T-cell (primary cell): ENCODE measurements at regions of chr13 and their contacts with region 1.

Region 1: DNA sequence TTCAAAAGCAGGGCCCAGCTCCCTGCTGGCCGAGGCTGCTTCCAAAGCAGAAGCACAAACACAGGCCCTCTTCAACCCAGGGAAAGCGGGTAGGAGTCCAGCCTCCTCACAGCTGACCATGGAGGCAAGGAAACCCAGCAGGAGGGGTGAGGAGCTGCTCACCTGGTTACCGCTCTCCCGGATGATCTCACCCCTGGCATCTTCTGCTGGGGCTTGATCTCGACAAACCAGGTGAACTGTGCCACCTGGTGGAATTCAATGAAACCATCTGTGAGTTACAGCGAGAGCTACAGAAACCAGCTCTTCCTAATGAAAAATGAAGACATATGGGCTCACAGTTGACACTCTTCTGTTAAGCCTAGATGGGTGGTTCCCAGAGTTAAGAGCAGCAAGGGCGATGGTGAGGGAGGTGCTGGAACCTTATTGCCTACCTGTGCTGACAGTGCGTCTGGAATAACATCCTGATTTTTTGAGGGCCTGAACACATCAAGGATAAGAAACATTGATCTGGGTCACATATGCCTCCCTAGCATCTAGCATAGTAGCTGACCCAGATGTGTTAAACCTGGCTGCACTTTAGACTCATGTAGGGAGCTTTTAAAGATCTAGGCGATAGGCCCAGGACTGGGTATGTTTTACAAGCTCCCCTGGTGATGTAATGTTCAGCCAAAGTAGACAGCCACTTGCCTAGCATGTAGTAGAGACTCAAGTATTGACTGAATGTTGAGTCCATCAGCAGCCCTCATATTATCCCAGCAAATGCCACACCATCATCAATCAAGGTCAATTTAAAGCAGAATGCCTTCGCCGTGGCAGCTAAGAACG is 6.1 kb downstream of the DHRS12 start:
- DNase-seq: peak in 34 of 35 experiments; percentile 17 to 81 (median 56)
- ATAC-seq: peak; percentile 60 to 75 (median 70)
- H3K4me3 ChIP-seq: no peak overlapping the region
- H3K4me3 Mint-ChIP-seq: no peak overlapping the region
- H3K27ac ChIP-seq: no peak overlapping the region
- H3K27ac Mint-ChIP-seq: peak overlapping the region in 1 of 2 donors; percentile 55
- H3K4me1 ChIP-seq: peaks cover 10 to 26% of the 10 kb centered on the region in 2 experiments
- H3K4me1 Mint-ChIP-seq: peaks cover 28 to 51% (median 37%) of the 10 kb centered on the region in 3 donors
- H3K27me3 ChIP-seq: no peaks in the 10 kb centered on the region
- H3K27me3 Mint-ChIP-seq: no peaks in the 10 kb centered on the region

Region 2: DNA sequence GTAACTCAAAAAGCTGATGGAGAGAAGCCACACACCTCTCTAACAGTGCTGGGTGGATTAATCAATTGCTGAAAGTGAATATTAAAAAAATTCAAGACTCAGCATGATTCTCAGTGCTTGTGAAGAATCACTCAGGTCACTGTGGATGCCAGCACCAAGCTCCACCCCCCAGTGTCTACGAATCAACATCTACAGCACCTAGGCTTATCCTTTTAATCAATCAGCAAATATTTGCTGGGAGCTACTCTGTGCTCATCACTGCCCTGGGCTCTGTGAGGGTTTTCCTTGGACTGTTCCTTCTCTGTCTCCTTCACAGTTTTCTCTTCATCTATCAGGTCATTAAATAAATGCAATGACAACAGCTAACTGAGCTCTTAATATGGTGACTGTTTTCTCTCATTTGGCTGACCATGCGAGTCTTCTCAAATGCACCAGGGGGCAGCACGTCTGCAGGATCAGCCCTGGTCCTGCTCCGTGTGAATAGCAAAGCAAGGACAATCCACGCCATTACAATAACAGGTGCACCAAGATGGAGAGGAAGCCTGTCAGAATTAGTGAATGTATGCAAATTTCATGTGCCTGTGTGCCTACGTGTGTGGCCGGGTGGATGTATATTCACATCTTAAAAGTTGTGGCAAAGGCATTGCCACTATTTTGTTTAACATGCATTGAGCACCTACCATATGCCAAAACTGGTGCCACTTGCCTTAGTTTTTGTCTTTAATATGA is 672.2 kb before region 1 on chr13:
- CTCF ChIA-PET with region 1: interaction called, 9 to 10 read pairs
- POLR2A ChIA-PET with region 1: no interaction called
- DNase-seq: peak in 22 of 35 experiments; percentile 6 to 60 (median 18)
- ATAC-seq: peak in 3 of 4 experiments; percentile 37 to 71 (median 54)
- H3K4me3 ChIP-seq: no peak overlapping the region
- H3K4me3 Mint-ChIP-seq: no peak overlapping the region
- H3K27ac ChIP-seq: no peak overlapping the region
- H3K27ac Mint-ChIP-seq: no peak overlapping the region
- H3K4me1 ChIP-seq: no peaks in the 10 kb centered on the region
- H3K4me1 Mint-ChIP-seq: peaks cover 0 to 10% (median 7%) of the 10 kb centered on the region in 3 donors
- H3K27me3 ChIP-seq: peaks cover 0 to 9% of the 10 kb centered on the region in 2 experiments
- H3K27me3 Mint-ChIP-seq: peaks cover 9% of the 10 kb centered on the region in 2 donors

Region 3: GRCh38 chr13:51425410-51426042 is 372.4 kb before region 1 on chr13:
- CTCF ChIA-PET with region 1: interaction called in 1 of 2 experiments, 11 read pairs
- POLR2A ChIA-PET with region 1: interaction called in 1 of 2 experiments, 7 read pairs
- DNase-seq: no peak
- ATAC-seq: no peak
- H3K4me3 ChIP-seq: no peak overlapping the region
- H3K4me3 Mint-ChIP-seq: no peak overlapping the region
- H3K27ac ChIP-seq: no peak overlapping the region
- H3K27ac Mint-ChIP-seq: no peak overlapping the region
- H3K4me1 ChIP-seq: peaks cover 9 to 42% of the 10 kb centered on the region in 2 experiments
- H3K4me1 Mint-ChIP-seq: peaks cover 82 to 84% (median 83%) of the 10 kb centered on the region in 3 donors
- H3K27me3 ChIP-seq: no peaks in the 10 kb centered on the region
- H3K27me3 Mint-ChIP-seq: no peaks in the 10 kb centered on the region

Region 4: DNA sequence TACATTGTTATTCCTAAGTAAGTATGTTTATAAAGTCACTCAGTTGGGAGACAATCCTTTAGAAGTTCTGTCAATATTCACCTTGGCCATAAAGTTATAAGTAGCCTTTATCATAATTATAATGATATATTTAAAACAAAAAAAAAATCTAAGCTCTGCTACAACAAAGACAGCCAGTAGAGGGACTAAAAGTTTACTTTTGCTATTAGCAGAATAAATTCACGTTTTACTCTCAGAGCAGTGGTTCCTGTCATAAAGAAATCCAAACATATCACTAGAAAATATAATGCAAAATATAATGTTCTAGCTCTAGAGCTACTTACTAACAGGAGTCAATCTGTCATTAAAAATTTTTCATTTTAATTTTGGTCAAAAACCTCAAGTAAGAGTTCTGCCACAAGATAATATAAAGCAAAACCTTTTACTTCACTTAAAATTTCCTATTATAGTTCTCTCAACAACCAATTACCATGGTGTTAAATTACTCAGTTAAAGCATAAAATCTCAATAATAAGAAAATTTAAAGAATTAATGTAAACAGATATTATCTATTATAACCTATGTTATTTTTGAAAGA is 362.8 kb before region 1 on chr13:
- CTCF ChIA-PET with region 1: interaction called, 29 to 85 read pairs
- POLR2A ChIA-PET with region 1: interaction called in 1 of 2 experiments, 4 read pairs
- DNase-seq: peak in 1 of 35 experiments; percentile 58
- ATAC-seq: peak in 1 of 4 experiments; percentile 51
- H3K4me3 ChIP-seq: no peak overlapping the region
- H3K4me3 Mint-ChIP-seq: no peak overlapping the region
- H3K27ac ChIP-seq: no peak overlapping the region
- H3K27ac Mint-ChIP-seq: no peak overlapping the region
- H3K4me1 ChIP-seq: peaks cover 0 to 9% of the 10 kb centered on the region in 2 experiments
- H3K4me1 Mint-ChIP-seq: peaks cover 18 to 27% (median 26%) of the 10 kb centered on the region in 3 donors
- H3K27me3 ChIP-seq: no peaks in the 10 kb centered on the region
- H3K27me3 Mint-ChIP-seq: no peaks in the 10 kb centered on the region

Region 5: DNA sequence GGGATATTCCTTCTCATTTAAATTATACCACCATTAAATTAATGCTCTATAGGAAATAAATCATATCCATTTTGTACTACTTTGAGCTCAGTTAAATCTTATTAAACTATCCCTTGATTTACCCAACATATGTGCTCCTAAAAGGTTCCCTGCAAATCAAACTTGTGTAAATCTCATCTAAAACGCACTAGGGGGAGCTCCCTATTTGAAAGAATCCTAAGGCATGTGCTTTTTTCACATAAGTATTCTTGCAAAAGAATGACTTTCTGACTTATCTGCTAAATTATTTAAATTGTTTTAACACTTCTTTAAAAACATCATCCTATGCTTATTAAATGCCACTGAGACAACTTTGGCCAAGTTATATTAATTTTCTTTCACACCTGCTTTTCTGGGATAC is 353.0 kb before region 1 on chr13:
- CTCF ChIA-PET with region 1: interaction called, 5 to 31 read pairs
- POLR2A ChIA-PET with region 1: interaction called in 1 of 2 experiments, 11 read pairs
- DNase-seq: peak in 1 of 35 experiments; percentile 49
- ATAC-seq: no peak
- H3K4me3 ChIP-seq: no peak overlapping the region
- H3K4me3 Mint-ChIP-seq: no peak overlapping the region
- H3K27ac ChIP-seq: no peak overlapping the region
- H3K27ac Mint-ChIP-seq: no peak overlapping the region
- H3K4me1 ChIP-seq: peaks cover 0 to 8% of the 10 kb centered on the region in 2 experiments
- H3K4me1 Mint-ChIP-seq: peaks cover 16 to 20% (median 20%) of the 10 kb centered on the region in 3 donors
- H3K27me3 ChIP-seq: no peaks in the 10 kb centered on the region
- H3K27me3 Mint-ChIP-seq: no peaks in the 10 kb centered on the region

Region 6: GRCh38 chr13:51681037-51681678 is 116.7 kb before region 1 on chr13:
- CTCF ChIA-PET with region 1: no interaction called
- POLR2A ChIA-PET with region 1: no interaction called
- DNase-seq: no peak
- ATAC-seq: no peak
- H3K4me3 ChIP-seq: no peak overlapping the region
- H3K4me3 Mint-ChIP-seq: no peak overlapping the region
- H3K27ac ChIP-seq: no peak overlapping the region
- H3K27ac Mint-ChIP-seq: no peak overlapping the region
- H3K4me1 ChIP-seq: no peaks in the 10 kb centered on the region
- H3K4me1 Mint-ChIP-seq: no peaks in the 10 kb centered on the region
- H3K27me3 ChIP-seq: no peaks in the 10 kb centered on the region
- H3K27me3 Mint-ChIP-seq: no peaks in the 10 kb centered on the region

Region 7: DNA sequence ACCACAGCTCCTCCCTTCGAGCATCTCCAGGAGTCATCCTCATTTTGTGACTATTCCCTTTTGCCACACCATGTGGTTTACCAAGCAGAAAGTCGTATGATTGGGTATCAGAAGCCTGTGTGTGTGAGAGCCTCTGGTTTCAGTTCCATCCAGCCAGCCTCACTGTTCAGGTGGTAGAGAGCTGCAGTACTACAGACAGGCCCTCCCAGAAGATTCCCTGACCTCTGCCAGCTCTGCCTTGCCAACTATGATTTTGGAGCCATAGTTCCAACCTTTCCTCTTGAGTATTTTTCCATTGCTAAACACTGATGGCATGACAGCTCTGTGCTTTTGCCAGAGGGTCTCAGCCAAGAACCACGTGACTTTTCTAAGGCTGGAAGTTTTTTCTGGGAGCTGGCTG is 76.4 kb before region 1 on chr13:
- CTCF ChIA-PET with region 1: no interaction called
- POLR2A ChIA-PET with region 1: no interaction called
- DNase-seq: no peak
- ATAC-seq: no peak
- H3K4me3 ChIP-seq: no peak overlapping the region
- H3K4me3 Mint-ChIP-seq: no peak overlapping the region
- H3K27ac ChIP-seq: no peak overlapping the region
- H3K27ac Mint-ChIP-seq: peak overlapping the region in 1 of 2 donors; percentile 33
- H3K4me1 ChIP-seq: no peaks in the 10 kb centered on the region
- H3K4me1 Mint-ChIP-seq: no peaks in the 10 kb centered on the region
- H3K27me3 ChIP-seq: no peaks in the 10 kb centered on the region
- H3K27me3 Mint-ChIP-seq: no peaks in the 10 kb centered on the region

Region 8: DNA sequence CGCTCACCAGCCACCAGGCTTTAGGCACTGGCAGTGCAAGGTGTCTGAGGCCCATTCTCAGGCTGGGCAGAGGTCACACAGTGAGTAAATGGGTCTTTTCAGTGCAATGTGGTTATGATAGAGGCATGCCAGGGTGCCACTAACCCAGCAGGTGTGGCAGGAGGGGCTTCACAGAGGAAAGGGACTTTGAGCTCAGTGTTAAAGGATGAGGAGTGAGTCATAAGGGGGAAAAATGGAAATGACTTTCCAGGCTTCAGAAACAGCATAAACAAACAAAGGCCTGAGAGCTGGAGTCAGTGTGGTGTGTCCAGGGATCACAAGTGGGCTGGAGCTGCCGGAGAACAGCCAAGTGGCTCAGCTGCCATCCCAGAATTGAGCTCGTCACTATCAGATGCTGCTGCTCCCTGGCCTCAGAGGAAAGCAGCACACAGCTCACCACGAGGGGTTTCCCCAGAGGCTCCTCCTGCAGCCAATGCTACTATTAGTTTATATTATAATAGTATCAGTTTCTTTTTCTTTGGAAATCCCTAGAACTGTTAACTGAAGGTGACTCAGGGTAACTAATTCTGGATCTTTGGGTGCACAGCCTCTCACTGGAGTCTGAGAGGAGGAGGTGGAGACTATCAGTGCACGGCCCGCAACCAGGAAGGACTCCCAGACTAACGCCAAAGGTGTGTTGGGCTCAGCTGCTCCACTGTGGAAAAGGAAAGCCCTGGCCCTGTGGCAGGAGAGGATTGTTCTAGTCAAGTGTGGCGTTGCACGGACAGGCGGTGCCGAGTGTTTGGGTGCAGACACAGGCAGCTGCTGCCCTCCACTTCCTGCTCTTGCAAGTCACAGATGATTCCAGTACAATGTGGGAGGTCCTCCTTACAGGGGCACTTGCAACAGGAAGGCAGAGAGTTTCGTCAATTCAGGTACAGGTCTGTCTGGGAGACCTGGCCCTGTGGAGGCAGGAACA is 33.4 kb before region 1 on chr13:
- CTCF ChIA-PET with region 1: interaction called, 8 to 17 read pairs
- POLR2A ChIA-PET with region 1: no interaction called
- DNase-seq: peak in 34 of 35 experiments; percentile 14 to 77 (median 43)
- ATAC-seq: peak; percentile 80 to 92 (median 82)
- H3K4me3 ChIP-seq: peak overlapping the region; percentile 29 to 40
- H3K4me3 Mint-ChIP-seq: peak overlapping the region; percentile 71 to 84 (median 76)
- H3K27ac ChIP-seq: peak overlapping the region; percentile 84
- H3K27ac Mint-ChIP-seq: peak overlapping the region; percentile 97 to 98
- H3K4me1 ChIP-seq: peaks cover 8 to 19% of the 10 kb centered on the region in 2 experiments
- H3K4me1 Mint-ChIP-seq: peaks cover 21 to 28% (median 24%) of the 10 kb centered on the region in 3 donors
- H3K27me3 ChIP-seq: no peaks in the 10 kb centered on the region
- H3K27me3 Mint-ChIP-seq: no peaks in the 10 kb centered on the region

Region 9: DNA sequence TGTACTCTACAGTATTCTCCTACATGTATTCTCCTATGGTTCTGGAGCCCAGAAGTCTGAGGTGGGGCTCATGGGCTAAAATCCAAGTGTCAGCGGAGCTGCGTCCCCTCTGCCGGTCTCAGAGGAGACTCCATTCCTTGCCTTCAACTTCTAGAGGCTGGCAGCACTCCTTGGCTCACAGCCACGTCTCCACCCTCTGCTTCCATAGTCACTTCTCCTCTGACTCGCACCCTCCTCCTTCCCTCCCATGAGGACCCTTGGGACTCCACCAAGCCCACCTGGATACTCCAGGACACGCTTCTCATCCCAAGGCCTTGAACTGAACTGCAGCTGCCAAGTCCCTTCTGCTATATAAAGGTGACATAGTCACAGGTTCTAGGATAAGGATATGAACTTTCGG is 21.7 kb before region 1 on chr13:
- CTCF ChIA-PET with region 1: no interaction called
- POLR2A ChIA-PET with region 1: no interaction called
- DNase-seq: no peak
- ATAC-seq: no peak
- H3K4me3 ChIP-seq: no peak overlapping the region
- H3K4me3 Mint-ChIP-seq: no peak overlapping the region
- H3K27ac ChIP-seq: no peak overlapping the region
- H3K27ac Mint-ChIP-seq: no peak overlapping the region
- H3K4me1 ChIP-seq: no peaks in the 10 kb centered on the region
- H3K4me1 Mint-ChIP-seq: no peaks in the 10 kb centered on the region
- H3K27me3 ChIP-seq: no peaks in the 10 kb centered on the region
- H3K27me3 Mint-ChIP-seq: no peaks in the 10 kb centered on the region

Region 10: GRCh38 chr13:51814825-51815650 is 17.2 kb after region 1 on chr13:
- CTCF ChIA-PET with region 1: interaction called, 4 to 19 read pairs
- POLR2A ChIA-PET with region 1: no interaction called
- DNase-seq: peak; percentile 29 to 89 (median 61)
- ATAC-seq: peak; percentile 68 to 79 (median 75)
- H3K4me3 ChIP-seq: peak overlapping the region in 1 of 2 donors; percentile 11
- H3K4me3 Mint-ChIP-seq: peak overlapping the region in 2 of 3 donors; percentile 45 to 67
- H3K27ac ChIP-seq: peak overlapping the region; percentile 4
- H3K27ac Mint-ChIP-seq: peak overlapping the region; percentile 94 to 96
- H3K4me1 ChIP-seq: peaks cover 33 to 67% of the 10 kb centered on the region in 2 experiments
- H3K4me1 Mint-ChIP-seq: peaks cover 64 to 81% (median 76%) of the 10 kb centered on the region in 3 donors
- H3K27me3 ChIP-seq: no peaks in the 10 kb centered on the region
- H3K27me3 Mint-ChIP-seq: no peaks in the 10 kb centered on the region

Region 11: DNA sequence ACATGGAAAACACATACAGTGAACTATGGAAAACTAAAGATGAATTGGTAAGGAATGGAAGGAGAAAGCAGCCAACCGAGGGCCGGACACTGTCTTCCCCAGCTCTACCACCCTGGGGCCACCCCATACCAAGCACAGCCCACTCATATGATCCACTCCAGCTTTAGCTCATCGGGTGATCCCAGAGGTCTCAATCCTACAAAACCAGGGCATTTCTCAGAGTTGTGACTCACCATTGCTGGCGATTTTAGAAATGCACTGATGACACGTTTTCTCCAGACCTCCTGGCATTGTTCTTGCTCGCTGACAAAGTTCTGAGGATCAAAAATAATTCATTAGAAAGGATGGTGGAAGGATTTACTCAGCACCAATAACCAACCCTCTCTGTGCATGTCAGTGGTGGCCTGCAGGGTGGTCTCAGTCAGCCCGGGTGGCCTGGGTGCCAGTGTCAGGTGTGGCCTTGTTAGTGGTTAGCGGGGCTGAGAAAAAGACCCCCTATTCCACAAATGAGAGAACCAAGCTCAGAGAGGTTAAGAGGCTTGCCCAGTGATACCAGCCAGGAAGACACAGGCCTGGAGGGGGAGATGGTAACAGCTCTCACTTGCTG is 40.5 kb after region 1 on chr13:
- CTCF ChIA-PET with region 1: no interaction called
- POLR2A ChIA-PET with region 1: no interaction called
- DNase-seq: no peak
- ATAC-seq: no peak
- H3K4me3 ChIP-seq: no peak overlapping the region
- H3K4me3 Mint-ChIP-seq: no peak overlapping the region
- H3K27ac ChIP-seq: no peak overlapping the region
- H3K27ac Mint-ChIP-seq: peak overlapping the region in 1 of 2 donors; percentile 11
- H3K4me1 ChIP-seq: peaks cover 0 to 6% of the 10 kb centered on the region in 2 experiments
- H3K4me1 Mint-ChIP-seq: peaks cover 0 to 9% (median 6%) of the 10 kb centered on the region in 3 donors
- H3K27me3 ChIP-seq: peaks cover 0 to 12% of the 10 kb centered on the region in 2 experiments
- H3K27me3 Mint-ChIP-seq: no peaks in the 10 kb centered on the region